Sciatic nerve (tissue), 2 donors: ENCODE measurements at regions of chr18 and their contacts with region 1.

Region 1: GRCh38 chr18:42839408-42839807 is 276.1 kb downstream of the RIT2 start:
- DNase-seq: no peak
- ATAC-seq: no peak

Region 2: DNA sequence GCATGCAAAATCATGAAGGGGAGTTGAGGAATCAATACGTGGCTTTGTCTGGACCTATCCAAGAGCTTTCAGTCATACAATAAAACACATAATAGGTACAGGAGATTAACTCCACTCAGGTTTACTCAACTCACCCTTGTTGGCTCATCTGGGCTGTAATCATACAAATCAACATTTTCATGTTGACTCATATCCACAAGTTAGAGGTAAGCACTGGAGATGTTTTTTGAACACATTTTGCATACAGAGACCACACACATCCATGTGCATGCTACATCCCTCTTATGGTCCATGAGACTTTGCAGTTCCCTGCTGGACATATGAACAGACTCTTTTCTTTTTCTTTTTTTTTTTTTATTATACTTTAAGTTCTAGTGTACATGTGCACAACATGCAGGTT is 1221.3 kb before region 1 on chr18:
- intact Hi-C with region 1: loop called (anchors 5 kb)
- DNase-seq: no peak
- ATAC-seq: no peak

Region 3: DNA sequence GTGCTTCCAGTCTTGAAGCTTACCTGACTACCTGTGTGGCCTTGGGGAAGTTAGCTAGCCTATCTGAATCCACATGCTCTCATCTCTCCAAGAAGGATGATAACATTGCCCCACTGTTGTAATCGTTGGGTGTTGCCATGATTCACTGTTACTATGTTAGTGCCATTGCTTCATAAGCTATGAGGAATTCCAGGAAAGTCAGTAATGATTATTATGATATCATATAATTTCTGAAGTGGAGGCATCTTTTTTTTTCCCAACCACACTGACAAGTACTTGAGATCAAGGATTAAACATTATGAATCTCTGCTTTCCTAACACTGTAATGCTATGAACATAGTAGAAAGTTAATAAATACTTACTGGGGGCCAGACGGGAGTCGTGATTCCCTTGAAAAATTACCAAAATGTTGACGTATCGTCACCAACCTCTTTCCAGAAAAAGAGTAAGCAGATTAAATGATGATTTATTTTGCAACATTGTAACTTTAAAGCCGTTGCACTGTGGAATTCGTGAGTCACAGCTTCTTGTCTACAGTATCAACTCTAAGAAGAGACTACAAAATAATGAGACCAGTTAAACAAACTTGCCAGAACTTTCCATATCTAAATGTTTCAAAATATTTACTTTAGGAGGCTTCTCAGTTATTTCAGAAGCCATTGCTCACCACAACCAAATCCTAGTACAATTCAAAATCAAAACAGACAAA is 424.5 kb before region 1 on chr18:
- intact Hi-C with region 1: no loop called
- DNase-seq: no peak
- ATAC-seq: peak; percentile 94